Psoas muscle (tissue), 8 donors: ENCODE measurements at regions of chr16 and their contacts with region 1.

Region 1: GRCh38 chr16:89860747-89861304 is 12.6 kb upstream of the TCF25 start:
- DNase-seq: peak; percentile 57 to 76
- ATAC-seq: peak; percentile 79 to 94 (median 85)
- H3K4me3 ChIP-seq: no peak overlapping the region
- H3K27ac ChIP-seq: no peak overlapping the region
- H3K4me1 ChIP-seq: no peaks in the 10 kb centered on the region
- H3K27me3 ChIP-seq: peaks cover 0 to 8% (median 0%) of the 10 kb centered on the region in 3 donors
- CTCF ChIP-seq: peak; percentile 83

Region 2: GRCh38 chr16:89657442-89658220 is 203.2 kb before region 1 on chr16 and contains the starts of genes CHMP1A and SPATA33:
- intact Hi-C with region 1: no loop called
- DNase-seq: peak; percentile 93 to 96
- ATAC-seq: peak; percentile 98 to 99 (median 99)
- H3K4me3 ChIP-seq: peak within 1 kb of the TSS; percentile 99
- H3K27ac ChIP-seq: peak within 1 kb of the TSS; percentile 91
- H3K4me1 ChIP-seq: peaks cover 16% of the 10 kb centered on the region
- H3K27me3 ChIP-seq: no peaks in the 10 kb centered on the region
- CTCF ChIP-seq: no peak
- total RNA-seq, gene CHMP1A: 42.2 to 49.9 (median 45.9) TPM
- total RNA-seq, gene SPATA33: 1.2 to 3.0 (median 2.5) TPM

Region 3: DNA sequence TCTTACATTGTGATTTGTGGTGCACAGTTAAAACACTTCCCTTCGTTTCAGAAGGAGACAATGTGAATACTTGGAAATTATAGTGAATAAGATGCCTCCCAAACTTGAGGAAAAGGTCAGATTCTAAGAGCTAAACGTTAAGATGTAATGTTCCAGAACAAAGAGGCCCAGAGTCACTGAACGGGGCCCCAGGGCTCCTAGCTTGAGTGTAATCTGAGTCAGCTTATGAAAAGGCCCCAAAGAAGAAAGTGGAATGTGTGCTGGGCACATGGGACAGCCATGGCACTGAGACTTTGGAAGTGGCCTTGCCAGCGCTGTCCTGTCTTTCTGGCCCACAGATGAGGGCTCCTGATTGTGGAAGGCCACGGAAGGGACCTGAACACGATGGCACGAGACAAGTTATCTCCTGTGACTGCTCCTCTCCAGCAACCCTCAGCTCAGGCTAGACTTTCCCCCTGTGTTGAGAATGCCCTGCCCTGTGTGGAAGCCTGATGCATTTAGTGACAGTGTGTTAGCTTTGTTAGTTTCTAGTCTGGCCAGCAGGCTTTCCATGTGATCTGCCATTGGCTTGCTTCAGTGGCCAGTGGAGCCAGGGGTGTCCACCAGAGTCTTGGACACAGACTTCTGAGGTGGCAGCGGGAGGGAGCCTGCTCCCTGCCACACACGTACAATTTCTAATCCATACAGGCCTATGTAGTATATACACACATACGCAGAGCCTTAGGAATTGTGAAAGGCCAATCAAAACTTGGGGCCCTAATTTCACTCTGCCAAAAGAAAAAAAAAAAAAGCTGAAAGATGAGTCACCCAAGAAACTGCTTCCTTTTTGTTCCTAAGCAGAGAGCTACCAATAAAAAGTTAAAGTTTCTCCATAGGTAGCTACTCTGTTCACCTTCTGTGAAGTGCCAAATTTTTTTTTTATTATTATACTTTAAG is 190.1 kb before region 1 on chr16:
- intact Hi-C with region 1: no loop called
- DNase-seq: no peak
- ATAC-seq: no peak
- H3K4me3 ChIP-seq: no peak overlapping the region
- H3K27ac ChIP-seq: no peak overlapping the region
- H3K4me1 ChIP-seq: no peaks in the 10 kb centered on the region
- H3K27me3 ChIP-seq: no peaks in the 10 kb centered on the region
- CTCF ChIP-seq: no peak

Region 4: DNA sequence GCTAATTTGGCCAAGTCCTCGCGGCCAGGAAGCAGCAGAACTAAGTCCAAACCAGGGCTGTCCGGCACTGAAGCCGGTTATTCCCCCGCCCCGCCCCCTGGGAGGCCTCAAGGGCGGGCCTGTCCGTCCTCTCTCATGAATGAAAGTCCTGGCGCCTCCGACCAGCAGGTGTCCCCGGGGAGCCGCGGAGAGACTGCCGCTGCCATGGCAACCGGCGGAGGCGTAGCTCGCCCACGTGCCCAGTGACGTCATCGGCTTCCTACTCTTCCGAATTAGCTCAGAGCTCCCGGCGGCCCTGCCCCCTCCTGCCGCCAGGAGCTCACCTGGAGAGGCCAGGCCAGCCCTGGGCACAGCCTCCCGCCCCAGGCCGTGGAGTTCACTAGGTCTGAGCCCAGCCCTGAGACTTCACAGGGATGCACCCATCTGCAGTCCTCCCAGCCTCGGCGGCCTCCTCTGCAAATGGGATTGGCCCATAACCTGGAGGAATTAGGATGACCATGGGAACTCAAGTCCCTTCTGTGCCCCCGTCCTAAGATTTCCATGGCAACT is 160.7 kb before region 1 on chr16:
- intact Hi-C with region 1: loop called (anchors 5 to 10 kb)
- DNase-seq: peak; percentile 97 to 99
- ATAC-seq: peak; percentile 84 to 90 (median 86)
- H3K4me3 ChIP-seq: peak overlapping the region; percentile 69
- H3K27ac ChIP-seq: peak overlapping the region; percentile 32
- H3K4me1 ChIP-seq: peaks cover 20% of the 10 kb centered on the region
- H3K27me3 ChIP-seq: peaks cover 0 to 45% (median 0%) of the 10 kb centered on the region in 3 donors
- CTCF ChIP-seq: peak; percentile 64

Region 5: DNA sequence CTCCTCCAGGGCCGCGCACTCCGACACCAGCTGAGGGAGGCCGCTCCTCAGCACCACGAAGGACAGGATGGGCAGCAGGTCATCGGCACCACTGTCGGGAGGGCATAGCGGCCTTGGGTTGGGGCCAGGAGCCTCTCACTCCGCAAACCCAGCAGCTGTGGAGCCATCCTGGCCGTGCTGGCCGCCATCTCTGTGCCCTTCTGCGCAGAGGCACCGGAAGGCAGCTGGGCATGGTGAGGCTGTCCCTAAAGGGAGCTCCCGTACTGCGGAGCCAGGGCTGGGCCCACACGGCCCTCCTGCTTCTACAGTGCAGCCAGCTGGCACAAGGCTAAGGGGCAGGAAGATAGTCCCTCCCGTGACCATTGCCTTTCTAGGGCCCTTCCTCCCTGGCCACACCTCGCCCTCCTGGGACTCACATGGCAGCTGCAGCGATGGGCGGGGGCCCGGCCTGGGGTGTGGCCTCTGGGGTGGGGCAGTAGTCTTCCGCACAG is 152.3 kb before region 1 on chr16:
- intact Hi-C with region 1: loop called (anchors 5 to 10 kb)
- DNase-seq: no peak
- ATAC-seq: no peak
- H3K4me3 ChIP-seq: no peak overlapping the region
- H3K27ac ChIP-seq: no peak overlapping the region
- H3K4me1 ChIP-seq: no peaks in the 10 kb centered on the region
- H3K27me3 ChIP-seq: peaks cover 0 to 19% (median 0%) of the 10 kb centered on the region in 3 donors
- CTCF ChIP-seq: no peak

Region 6: DNA sequence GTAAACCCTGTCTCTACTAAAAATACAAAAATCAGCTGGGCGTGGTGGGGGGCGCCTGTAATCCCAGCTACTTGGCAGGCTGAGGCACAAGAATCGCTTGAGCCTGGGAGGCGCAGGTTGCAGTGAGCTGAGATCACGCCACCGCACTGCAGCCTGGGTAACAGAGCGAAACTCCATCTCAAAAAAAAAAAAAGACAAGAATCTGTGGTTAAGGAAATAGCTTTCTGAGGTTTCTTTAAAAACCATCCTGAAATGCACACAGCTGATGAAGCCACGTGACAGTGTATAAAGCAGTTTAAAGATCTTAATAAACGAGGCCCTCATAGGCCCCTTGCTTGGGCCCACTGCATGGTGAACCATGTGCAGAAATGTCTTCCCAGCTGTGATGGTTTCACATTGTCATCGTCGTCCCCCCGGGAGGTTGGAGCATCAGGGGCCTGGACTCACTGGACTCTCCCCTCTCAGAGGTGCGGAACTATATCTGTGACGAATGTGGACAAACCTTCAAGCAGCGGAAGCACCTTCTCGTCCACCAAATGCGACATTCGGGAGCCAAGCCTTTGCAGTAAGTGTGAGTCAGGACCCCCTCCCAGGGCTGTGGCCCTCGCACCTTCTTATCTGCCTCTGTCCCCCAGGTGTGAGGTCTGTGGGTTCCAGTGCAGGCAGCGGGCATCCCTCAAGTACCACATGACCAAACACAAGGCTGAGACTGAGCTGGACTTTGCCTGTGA is 123.3 kb before region 1 on chr16:
- intact Hi-C with region 1: no loop called
- DNase-seq: no peak
- ATAC-seq: no peak
- H3K4me3 ChIP-seq: no peak overlapping the region
- H3K27ac ChIP-seq: no peak overlapping the region
- H3K4me1 ChIP-seq: no peaks in the 10 kb centered on the region
- H3K27me3 ChIP-seq: no peaks in the 10 kb centered on the region
- CTCF ChIP-seq: no peak

Region 7: DNA sequence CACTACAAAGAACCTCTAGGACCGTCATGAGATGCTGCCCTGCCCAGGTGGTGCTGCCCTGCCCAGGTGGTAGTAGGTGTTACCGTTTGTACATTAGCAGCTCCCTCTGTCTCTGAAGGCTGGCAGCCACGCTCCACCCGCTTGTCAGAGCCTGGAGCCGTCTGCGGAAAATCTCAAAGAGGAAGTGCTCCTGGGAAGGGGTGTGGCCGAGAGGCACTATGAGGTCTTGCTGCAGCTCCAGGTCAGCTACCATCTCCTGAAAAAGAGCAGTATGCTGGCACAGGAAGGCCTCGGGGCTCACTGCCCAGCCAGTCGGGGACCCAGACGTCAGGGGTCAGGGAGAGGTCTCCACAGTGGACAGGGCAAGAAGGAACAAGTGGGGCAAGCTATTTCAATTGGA is 111.2 kb before region 1 on chr16:
- intact Hi-C with region 1: loop called in 1 of 2 experiments (anchors 2 kb)
- DNase-seq: no peak
- ATAC-seq: no peak
- H3K4me3 ChIP-seq: no peak overlapping the region
- H3K27ac ChIP-seq: no peak overlapping the region
- H3K4me1 ChIP-seq: no peaks in the 10 kb centered on the region
- H3K27me3 ChIP-seq: no peaks in the 10 kb centered on the region
- CTCF ChIP-seq: no peak